Aorta (tissue), 5 donors: ENCODE measurements at regions of chr2 and their contacts with region 1.

Region 1: DNA sequence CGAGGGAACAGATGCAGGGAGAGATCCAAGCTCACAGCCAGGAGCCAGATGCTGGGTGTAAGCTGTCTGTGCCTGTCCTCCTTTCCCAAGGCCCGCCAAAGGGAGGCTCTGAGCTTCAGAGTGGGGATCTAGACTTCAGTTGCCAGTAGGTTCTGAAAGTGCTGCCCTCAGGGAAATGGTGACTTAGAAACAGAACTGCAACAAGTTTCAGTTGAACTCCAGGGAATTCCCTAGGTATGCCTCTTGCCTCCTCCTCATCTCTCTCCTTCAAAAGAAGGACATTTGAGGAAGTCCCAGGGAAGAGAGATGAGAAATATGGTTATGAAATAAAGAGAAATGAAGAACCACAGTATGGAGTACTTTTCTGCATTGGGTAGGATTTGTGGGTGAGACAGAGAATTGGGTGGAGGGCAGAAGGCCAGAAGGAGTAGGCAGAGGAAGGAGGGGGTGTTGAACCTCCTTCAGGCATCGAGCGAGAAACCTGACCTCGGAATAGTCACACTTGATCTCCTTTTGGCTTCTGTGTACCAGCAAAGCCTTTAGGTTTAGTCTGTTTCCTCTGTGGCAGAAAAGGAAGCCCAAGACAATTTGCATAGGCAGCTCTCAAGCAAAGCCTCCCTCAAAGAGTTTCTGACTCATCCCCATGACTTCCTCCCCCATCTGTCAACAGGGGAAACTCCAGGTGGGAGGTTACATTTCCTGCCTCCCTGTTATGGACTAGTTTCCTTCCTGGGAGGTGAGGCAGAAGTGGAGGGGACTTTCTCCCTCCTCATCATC is 45.7 kb downstream of the QPCT start:
- DNase-seq: no peak
- ATAC-seq: peak; percentile 34
- H3K4me3 ChIP-seq: no peak overlapping the region
- H3K27ac ChIP-seq: no peak overlapping the region
- H3K4me1 ChIP-seq: no peaks in the 10 kb centered on the region
- H3K27me3 ChIP-seq: no peaks in the 10 kb centered on the region

Region 2: DNA sequence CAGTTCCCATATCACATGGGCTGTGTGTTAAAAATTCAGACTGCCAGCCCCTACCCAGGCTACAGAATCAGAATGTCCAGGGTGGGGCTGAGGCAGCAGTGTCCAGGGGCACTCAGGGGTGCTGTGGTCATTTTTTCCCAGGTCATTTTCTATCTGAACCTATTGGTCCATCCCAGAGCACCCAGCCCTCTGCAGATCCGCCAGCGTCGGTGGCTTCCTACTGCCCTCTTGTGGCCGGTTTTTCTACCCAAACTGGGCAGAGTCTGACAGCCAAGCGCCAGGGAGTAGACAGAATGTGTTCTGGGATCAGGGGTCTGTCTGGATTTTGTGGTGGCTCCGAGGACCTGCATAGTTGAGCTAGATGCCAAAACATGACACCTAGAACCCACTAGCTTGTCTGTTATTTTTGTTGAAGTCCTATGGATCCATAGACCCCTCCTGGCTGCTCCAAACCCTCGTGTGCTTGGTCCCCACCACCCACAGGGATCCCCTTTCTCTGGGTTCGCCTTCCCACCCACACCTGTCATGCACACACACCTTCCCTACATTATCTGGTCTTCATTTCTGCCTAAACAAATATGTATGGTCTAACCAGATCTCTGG is 500.8 kb after region 1 on chr2:
- intact Hi-C with region 1: loop called (anchors 5 kb)
- DNase-seq: peak; percentile 81 to 86
- ATAC-seq: peak; percentile 87
- H3K4me3 ChIP-seq: no peak overlapping the region
- H3K27ac ChIP-seq: no peak overlapping the region
- H3K4me1 ChIP-seq: no peaks in the 10 kb centered on the region
- H3K27me3 ChIP-seq: no peaks in the 10 kb centered on the region

Region 3: GRCh38 chr2:38498045-38498481 is 1107.9 kb after region 1 on chr2:
- intact Hi-C with region 1: loop called in 1 of 2 experiments (anchors 10 kb)
- DNase-seq: no peak
- ATAC-seq: no peak
- H3K4me3 ChIP-seq: no peak overlapping the region
- H3K27ac ChIP-seq: no peak overlapping the region
- H3K4me1 ChIP-seq: peaks cover 0 to 2% of the 10 kb centered on the region in 2 donors
- H3K27me3 ChIP-seq: no peaks in the 10 kb centered on the region